Spleen (tissue), 13 donors: ENCODE measurements at regions of chr10 and their contacts with region 1.

Region 1: DNA sequence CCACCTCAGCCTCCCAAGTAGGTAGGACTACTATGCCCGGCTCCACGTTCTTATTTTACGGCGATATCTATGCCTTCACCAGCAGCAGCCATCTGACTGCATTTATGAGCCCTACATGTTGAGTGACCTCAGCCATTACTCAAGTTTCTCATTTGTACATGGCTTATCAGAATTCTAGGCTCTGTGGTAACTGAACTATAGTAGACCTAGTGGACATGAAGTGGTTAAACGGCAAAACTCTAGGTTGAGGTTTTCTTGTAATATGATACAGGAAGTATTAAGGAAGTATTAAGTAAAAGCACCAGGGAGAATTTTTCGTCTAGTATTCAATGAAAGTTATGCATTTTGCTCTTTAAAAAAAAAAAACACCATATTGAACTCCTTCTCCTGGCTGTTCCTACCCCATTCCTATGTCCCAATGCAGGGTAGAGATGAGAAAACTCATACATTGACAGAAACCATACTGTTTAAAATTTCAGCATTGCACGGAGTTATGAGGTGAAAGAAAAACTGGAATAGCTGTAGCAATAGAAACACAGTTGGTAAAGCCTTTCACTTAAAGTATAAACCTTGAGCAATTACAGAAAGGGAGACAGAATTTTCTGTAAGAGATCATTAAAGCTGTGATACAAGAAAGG is 39.8 kb upstream of the EPC1 start:
- DNase-seq: no peak
- H3K4me3 ChIP-seq: no peak overlapping the region
- H3K27ac ChIP-seq: no peak overlapping the region
- H3K4me1 ChIP-seq: peaks cover 0 to 14% (median 2%) of the 10 kb centered on the region in 6 donors
- H3K27me3 ChIP-seq: no peaks in the 10 kb centered on the region
- CTCF ChIP-seq: no peak
- POLR2A ChIP-seq: no peak

Region 2: GRCh38 chr10:32445740-32446535 is 59.2 kb after region 1 on chr10 and contains the start of gene CCDC7:
- intact Hi-C with region 1: loop called (anchors 5 kb)
- DNase-seq: peak; percentile 97
- H3K4me3 ChIP-seq: peak within 1 kb of the TSS; percentile 51 to 83 (median 66)
- H3K27ac ChIP-seq: peak within 1 kb of the TSS; percentile 95 to 98 (median 97)
- H3K4me1 ChIP-seq: peaks cover 0 to 23% (median 15%) of the 10 kb centered on the region in 6 donors
- H3K27me3 ChIP-seq: peaks cover 0 to 3% (median 0%) of the 10 kb centered on the region in 7 donors
- CTCF ChIP-seq: peak in 9 of 11 experiments; percentile 30 to 77 (median 60)
- POLR2A ChIP-seq: peak in 2 of 3 donors; percentile 47 to 69
- total RNA-seq, gene CCDC7: 17.5 to 32.6 (median 29.3) TPM